Mammary epithelial cell (primary cell): ENCODE measurements at regions of chr5 and their contacts with region 1.

Region 1: DNA sequence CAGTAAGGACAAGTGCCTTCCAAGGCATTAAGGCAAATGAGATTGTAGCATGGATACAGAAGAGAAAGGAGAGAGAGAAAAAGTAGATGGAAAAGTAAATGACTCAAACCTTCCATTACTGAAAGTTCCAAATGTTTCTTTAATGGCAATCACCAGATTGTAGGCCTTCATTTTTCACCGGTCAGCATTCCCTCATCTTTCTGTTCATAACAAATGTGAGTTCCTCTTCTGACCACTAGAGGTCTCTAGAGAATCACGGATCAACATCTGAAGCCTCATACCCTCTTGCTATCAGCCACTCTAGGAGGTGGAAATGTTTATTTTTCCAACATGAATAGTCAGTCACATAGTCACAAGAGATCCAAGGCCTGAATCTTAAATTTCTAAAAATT is 73.6 kb upstream of the RPS23 start:
- DNase-seq: peak; percentile 69
- H3K4me3 ChIP-seq: no peak overlapping the region
- H3K27ac ChIP-seq: no peak overlapping the region
- H3K4me1 ChIP-seq: peaks cover 3% of the 10 kb centered on the region
- H3K27me3 ChIP-seq: no peaks in the 10 kb centered on the region
- CTCF ChIP-seq: peak; percentile 64 to 70

Region 2: DNA sequence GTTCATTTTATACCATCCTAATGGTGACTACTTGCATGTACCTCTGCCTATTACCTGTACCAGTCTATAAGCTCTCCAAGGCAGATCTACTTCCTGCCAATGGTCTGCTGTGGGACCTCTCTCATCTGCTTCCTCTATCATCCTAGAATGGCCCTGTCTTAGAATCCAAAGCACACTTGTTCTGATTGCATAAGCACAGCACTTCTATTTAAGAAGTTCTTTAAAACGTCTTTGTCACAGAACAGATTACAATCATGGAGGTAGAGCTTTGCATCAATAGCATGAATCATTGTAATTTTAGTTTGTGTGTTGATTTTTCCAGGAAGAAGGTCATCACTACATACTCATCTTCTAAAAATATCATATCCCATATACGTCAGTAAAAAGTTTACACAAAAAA is 826.1 kb before region 1 on chr5:
- CTCF ChIA-PET with region 1: no interaction called
- dilution Hi-C with region 1: no loop called
- in situ Hi-C with region 1: no loop called
- intact Hi-C with region 1: no loop called
- DNase-seq: no peak
- H3K4me3 ChIP-seq: no peak overlapping the region
- H3K27ac ChIP-seq: no peak overlapping the region
- H3K4me1 ChIP-seq: no peaks in the 10 kb centered on the region
- H3K27me3 ChIP-seq: no peaks in the 10 kb centered on the region
- CTCF ChIP-seq: no peak

Region 3: DNA sequence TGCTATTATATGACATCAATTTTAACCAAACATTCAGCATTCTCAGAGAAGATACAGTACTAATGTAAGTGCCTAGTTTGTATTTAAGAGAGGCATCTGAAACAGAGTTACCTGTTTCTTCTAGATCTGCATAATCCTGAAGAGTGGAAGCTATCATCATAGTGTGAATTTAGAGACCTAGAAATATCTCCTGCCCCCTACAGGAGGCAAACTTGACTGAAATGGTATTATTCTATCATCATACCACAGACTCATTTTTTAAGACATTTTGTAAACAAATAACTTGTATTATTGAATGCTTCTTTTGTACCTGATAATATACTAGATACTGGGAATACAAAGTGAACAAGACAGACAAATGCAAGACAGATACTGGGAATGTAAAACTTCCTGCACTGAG is 143.2 kb after region 1 on chr5:
- CTCF ChIA-PET with region 1: no interaction called
- dilution Hi-C with region 1: no loop called
- in situ Hi-C with region 1: no loop called
- intact Hi-C with region 1: loop called (anchors 2 kb)
- DNase-seq: no peak
- H3K4me3 ChIP-seq: no peak overlapping the region
- H3K27ac ChIP-seq: no peak overlapping the region
- H3K4me1 ChIP-seq: no peaks in the 10 kb centered on the region
- H3K27me3 ChIP-seq: peaks cover 2% of the 10 kb centered on the region
- CTCF ChIP-seq: peak; percentile 25 to 45

Region 4: DNA sequence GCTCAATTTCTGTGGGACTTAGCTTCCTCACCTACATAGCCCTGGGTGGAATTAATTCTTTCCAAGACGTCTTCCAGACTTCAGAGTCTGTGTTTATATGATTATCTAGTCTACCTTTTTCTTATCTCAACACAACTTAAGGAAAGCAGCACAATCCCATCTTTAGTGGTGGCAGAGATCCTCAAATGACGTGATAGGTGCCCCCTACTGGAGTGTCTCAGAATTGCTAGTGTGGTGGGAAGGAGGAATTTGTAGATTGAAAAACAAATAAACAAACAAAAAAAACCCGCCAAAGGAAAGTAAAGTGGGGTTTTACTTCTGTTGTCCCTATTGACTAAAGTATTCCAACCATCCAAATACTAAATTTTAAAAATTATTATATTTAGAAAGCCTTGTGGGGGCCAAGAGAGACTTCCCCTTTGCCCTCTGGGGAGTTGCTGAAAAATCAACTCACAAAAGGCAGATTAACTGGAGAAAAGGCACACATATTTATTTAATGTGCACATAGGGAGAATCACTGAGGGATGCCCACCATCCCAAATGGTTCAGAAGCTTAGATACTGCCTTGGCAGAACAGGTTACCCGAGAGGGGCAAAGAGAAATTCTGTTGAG is 442.2 kb after region 1 on chr5:
- CTCF ChIA-PET with region 1: no interaction called
- dilution Hi-C with region 1: no loop called
- in situ Hi-C with region 1: loop called in 1 of 2 experiments (anchors 25 kb)
- intact Hi-C with region 1: loop called (anchors 5 kb)
- DNase-seq: no peak
- H3K4me3 ChIP-seq: no peak overlapping the region
- H3K27ac ChIP-seq: no peak overlapping the region
- H3K4me1 ChIP-seq: peaks cover 3% of the 10 kb centered on the region
- H3K27me3 ChIP-seq: no peaks in the 10 kb centered on the region
- CTCF ChIP-seq: peak; percentile 73 to 74

Region 5: GRCh38 chr5:83430130-83431010 is 1078.6 kb after region 1 on chr5:
- CTCF ChIA-PET with region 1: no interaction called
- dilution Hi-C with region 1: no loop called
- in situ Hi-C with region 1: no loop called
- intact Hi-C with region 1: loop called (anchors 1 kb)
- DNase-seq: peak; percentile 46
- H3K4me3 ChIP-seq: no peak overlapping the region
- H3K27ac ChIP-seq: no peak overlapping the region
- H3K4me1 ChIP-seq: no peaks in the 10 kb centered on the region
- H3K27me3 ChIP-seq: no peaks in the 10 kb centered on the region
- CTCF ChIP-seq: peak; percentile 95

Region 6: DNA sequence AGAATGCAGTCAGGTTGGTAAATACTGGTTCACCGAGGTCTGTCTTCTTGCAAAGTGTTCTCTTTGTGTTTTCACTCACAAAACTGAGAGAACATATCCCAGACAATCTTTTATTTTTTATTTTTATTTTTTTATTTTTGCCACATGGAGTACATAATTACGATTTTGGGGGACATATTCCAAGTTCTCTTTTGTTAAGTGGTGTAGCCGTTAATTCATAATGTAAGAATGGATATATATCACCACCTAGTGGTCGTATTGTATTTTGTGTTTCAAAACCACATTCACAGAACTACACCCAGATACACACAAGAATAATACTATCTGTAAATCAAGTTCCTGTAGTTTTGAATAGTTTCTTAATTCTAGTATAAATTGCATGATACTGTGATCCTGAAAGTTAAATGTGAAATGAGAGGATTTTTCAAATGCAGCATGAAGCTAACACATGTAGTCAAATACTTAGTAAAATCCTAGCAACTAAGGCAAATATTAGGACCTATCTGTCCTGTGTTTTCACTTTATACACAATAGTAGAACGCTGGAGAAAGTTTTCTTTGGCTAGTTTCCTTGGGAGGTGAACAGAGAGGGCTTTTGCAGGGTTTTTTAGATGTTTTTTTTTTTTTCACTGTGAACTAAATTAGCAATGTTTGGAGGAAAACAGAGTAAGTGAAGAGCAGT is 1212.5 kb after region 1 on chr5:
- CTCF ChIA-PET with region 1: no interaction called
- dilution Hi-C with region 1: no loop called
- in situ Hi-C with region 1: loop called (anchors 25 kb)
- intact Hi-C with region 1: loop called (anchors 1 kb)
- DNase-seq: peak; percentile 21
- H3K4me3 ChIP-seq: no peak overlapping the region
- H3K27ac ChIP-seq: no peak overlapping the region
- H3K4me1 ChIP-seq: peaks cover 12% of the 10 kb centered on the region
- H3K27me3 ChIP-seq: no peaks in the 10 kb centered on the region
- CTCF ChIP-seq: peak; percentile 40 to 51